Left lung (tissue), 14 donors: ENCODE measurements at regions of chr7 and their contacts with region 1.

Region 1: DNA sequence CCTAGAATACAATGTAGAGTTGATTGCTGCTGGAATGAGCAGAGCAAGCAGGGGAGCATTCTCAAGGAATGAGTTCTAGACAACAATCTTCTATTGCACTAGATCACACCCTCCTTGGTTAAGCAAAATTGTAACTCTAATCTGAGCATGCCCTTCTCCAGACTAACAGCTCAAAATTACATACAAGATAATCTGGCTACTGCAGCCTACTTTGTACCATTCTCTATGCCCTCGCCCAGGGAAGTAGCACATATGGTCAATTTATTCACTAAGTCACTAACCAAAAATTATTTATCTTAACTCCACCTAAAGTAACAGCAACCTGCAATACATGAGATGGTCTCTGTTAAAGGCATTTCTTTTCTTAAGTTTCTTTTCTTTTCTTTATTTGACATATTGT is 42.5 kb upstream of the KCTD7 start:
- DNase-seq: no peak
- ATAC-seq: no peak
- H3K4me3 ChIP-seq: no peak overlapping the region
- H3K27ac ChIP-seq: no peak overlapping the region
- H3K4me1 ChIP-seq: peaks cover 7 to 53% of the 10 kb centered on the region in 2 donors
- H3K27me3 ChIP-seq: no peaks in the 10 kb centered on the region
- CTCF ChIP-seq: no peak

Region 2: DNA sequence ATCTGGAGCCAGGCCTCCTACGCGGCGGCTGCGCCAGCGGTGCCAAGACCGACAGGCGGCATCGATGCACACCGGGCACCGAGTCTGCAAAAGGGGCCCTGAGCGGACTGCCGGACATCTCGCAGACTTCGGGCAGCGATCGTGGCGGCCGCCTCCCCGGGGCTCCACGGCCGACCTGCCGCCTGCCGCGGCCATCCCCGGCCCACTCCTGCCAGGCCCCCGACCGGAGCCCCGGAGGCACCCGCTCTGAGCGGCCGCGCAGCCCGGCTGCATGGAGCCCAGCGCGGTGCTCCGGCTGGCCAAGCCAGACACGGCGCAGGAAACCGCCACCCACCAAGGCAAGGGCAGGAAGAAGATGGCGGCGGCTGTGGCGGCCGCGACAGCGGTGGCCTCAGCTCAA is 111.7 kb before region 1 on chr7:
- intact Hi-C with region 1: loop called in 1 of 2 experiments (anchors 5 kb)
- DNase-seq: peak in 1 of 4 donors; percentile 74
- ATAC-seq: no peak
- H3K4me3 ChIP-seq: no peak overlapping the region
- H3K27ac ChIP-seq: no peak overlapping the region
- H3K4me1 ChIP-seq: no peaks in the 10 kb centered on the region
- H3K27me3 ChIP-seq: no peaks in the 10 kb centered on the region
- CTCF ChIP-seq: no peak